Activated T-helper 1 cell treated with anti-CD3 and anti-CD28 coated beads, Interleukin-12 subunit alpha, Interleukin-12 subunit beta, Interleukin-2, Interleukin-4 antibody, amounts not matched to agents 30 ng/mL and 10 ng/mL and 1 ng/mL, durations not matched to agents 14 hours and 24 hours and 36 hours (primary cell): ENCODE measurements at regions of chr11 and their contacts with region 1.

Region 1: GRCh38 chr11:45872513-45873356 is 12.7 kb upstream of the MAPK8IP1 start:
- DNase-seq: no peak
- H3K4me3 Mint-ChIP-seq: no peak overlapping the region
- H3K27ac Mint-ChIP-seq: no peak overlapping the region
- H3K4me1 Mint-ChIP-seq: no peaks in the 10 kb centered on the region
- H3K27me3 Mint-ChIP-seq: no peaks in the 10 kb centered on the region

Region 2: DNA sequence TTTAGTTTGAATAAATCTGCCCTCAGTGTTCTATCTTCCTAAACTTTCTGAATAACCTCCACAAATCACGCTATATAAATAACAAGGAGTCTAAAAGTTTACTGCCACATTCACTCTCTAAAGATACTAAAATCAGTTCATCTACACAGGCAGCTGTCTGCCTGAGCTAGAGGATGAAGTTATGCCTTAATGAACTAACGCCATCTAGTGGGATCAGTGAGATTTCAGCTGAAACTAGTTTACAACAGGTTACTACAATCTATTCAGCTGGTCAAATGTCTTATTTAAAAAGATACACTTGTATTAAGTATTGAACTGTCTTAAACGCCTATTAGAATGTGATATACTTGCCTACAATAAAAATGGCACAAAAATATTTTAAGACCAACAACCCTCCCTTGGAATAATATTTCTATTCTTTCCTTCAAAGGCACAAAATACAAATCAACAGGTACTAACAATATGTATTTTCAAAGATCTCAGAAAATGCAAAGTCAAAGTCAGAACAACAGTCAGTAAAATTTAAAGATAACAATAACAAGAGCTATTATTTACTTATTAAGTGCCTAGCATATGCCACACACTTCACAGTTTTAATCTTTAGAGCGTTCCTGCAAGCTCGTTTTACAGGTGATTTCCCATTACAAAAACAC is 133.8 kb after region 1 on chr11:
- intact Hi-C with region 1: loop called (anchors 2 kb)
- DNase-seq: no peak
- H3K4me3 Mint-ChIP-seq: no peak overlapping the region
- H3K27ac Mint-ChIP-seq: no peak overlapping the region
- H3K4me1 Mint-ChIP-seq: no peaks in the 10 kb centered on the region
- H3K27me3 Mint-ChIP-seq: no peaks in the 10 kb centered on the region

Region 3: DNA sequence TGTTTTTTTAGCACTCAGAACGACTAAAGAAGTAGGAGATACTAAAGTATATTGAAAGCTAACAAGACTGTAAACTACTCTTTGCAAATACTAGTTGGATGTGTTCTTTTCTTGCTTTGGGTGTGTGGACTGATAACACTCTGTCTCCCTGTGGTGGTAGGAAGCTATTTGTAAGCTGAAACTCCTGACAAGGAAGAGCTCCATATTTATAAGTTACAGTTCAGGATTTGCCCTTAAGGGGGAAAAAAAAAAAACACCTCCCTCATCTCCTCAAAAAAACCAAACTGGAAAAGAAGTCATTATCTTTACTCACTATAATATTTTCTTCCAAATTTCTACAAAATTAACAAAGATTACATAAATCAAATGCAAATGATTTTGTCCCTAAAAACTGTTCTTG is 144.6 kb after region 1 on chr11:
- intact Hi-C with region 1: no loop called
- DNase-seq: no peak
- H3K4me3 Mint-ChIP-seq: no peak overlapping the region
- H3K27ac Mint-ChIP-seq: no peak overlapping the region
- H3K4me1 Mint-ChIP-seq: no peaks in the 10 kb centered on the region
- H3K27me3 Mint-ChIP-seq: no peaks in the 10 kb centered on the region

Region 4: DNA sequence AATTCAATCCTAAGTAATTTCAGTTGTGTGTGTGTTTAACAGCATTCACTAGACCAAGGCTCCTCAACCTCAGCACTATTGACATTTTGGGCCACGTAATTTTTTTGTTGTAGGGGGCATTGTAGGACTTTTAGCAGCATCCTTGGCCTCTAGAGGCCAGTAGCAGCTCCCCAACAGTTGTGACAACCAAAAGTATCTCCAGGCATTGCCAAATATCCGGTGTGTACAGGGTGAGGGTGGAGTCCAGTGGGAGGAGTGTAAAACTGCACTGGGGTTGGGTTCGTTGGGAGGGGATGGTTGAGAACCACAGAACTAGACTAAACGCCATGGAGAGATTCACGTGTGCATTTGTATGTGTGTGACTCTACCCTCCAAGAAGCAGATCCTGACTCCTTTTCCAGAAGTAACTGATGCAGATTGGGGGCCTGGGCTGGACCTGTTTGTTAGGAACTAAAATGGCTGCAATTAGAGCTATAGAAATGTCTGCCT is 254.5 kb after region 1 on chr11:
- intact Hi-C with region 1: no loop called
- DNase-seq: peak; percentile 68
- H3K4me3 Mint-ChIP-seq: no peak overlapping the region
- H3K27ac Mint-ChIP-seq: peak overlapping the region; percentile 50
- H3K4me1 Mint-ChIP-seq: peaks cover 21% of the 10 kb centered on the region
- H3K27me3 Mint-ChIP-seq: no peaks in the 10 kb centered on the region

Region 5: GRCh38 chr11:46560300-46560991 is 687.7 kb after region 1 on chr11:
- intact Hi-C with region 1: no loop called
- DNase-seq: peak; percentile 16
- H3K4me3 Mint-ChIP-seq: peak overlapping the region; percentile 85
- H3K27ac Mint-ChIP-seq: peak overlapping the region; percentile 76
- H3K4me1 Mint-ChIP-seq: peaks cover 59% of the 10 kb centered on the region
- H3K27me3 Mint-ChIP-seq: no peaks in the 10 kb centered on the region